ENCODE measurements at regions of chr1 and their contacts with region 1.

Region 1: GRCh38 chr1:62343911-62344310 is 24.7 kb upstream of the KANK4 start:
- DNase-seq: no peak
- H3K4me3 ChIP-seq: no peak overlapping the region
- H3K27ac ChIP-seq: no peak overlapping the region
- H3K4me1 ChIP-seq: peaks cover 2% of the 10 kb centered on the region
- H3K27me3 ChIP-seq: no peaks in the 10 kb centered on the region
- CTCF ChIP-seq: no peak

Region 2: DNA sequence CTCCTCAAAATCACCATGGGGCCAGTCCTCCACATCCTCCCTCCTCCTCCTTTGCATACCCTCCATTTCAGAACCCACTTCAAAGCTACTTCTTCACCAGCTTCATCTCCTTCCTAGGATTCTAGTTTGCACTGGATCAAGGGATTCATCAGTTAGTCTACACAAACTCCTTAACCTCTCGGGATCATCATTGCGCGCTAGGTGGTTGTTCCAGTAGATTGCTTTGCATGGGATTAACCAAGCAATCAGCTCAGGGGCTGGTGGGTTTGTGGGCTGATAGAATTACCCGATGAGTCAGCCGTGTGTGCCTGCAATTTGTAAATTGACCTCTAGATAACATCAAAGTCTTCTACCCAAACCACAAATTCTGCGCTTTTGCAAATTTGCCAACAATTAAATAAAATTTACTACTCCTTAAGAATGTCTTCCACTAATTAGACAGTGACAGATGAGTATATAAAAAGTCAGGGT is 32.4 kb before region 1 on chr1:
- CTCF ChIA-PET with region 1: no interaction called
- POLR2A ChIA-PET with region 1: interaction called, 12 read pairs
- intact Hi-C with region 1: no loop called
- DNase-seq: peak; percentile 76
- H3K4me3 ChIP-seq: no peak overlapping the region
- H3K27ac ChIP-seq: no peak overlapping the region
- H3K4me1 ChIP-seq: peaks cover 26% of the 10 kb centered on the region
- H3K27me3 ChIP-seq: peaks cover 10% of the 10 kb centered on the region
- CTCF ChIP-seq: no peak

Region 3: DNA sequence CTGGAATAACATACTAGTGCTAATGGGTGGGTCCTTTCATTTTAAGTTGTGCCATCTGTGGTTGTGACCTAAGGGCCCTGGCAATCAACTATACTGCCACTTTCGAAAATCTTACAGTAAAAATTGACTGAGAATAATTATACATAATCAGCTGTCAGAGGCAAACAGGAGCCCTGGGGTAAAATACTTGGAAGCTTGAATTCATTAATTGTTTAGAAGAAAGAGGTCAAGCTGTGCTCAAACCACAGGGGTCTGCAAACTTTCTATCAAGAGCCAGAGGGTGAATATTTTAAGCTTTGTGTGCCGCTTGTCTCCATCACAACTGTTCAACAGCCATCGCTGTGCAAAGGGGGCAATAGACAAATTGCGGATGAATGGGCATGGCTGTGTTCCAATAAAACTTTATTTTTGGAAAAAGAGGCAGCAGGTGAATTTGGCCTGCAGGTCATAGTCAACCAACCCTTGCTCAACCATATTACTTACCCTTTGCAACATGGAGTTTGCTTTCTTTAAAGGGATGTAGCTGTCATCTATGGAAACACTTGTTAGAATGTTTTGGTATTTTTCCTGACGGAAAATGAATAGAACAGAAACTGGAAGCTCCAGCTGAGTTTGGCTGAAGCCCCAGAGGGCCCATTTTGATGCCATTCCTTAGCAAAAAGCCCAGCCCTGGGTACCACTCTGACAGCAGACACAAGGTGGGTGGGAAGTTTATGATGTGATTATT is 57.3 kb after region 1 on chr1:
- CTCF ChIA-PET with region 1: interaction called, 10 read pairs
- POLR2A ChIA-PET with region 1: no interaction called
- intact Hi-C with region 1: no loop called
- DNase-seq: peak; percentile 86
- H3K4me3 ChIP-seq: no peak overlapping the region
- H3K27ac ChIP-seq: no peak overlapping the region
- H3K4me1 ChIP-seq: no peaks in the 10 kb centered on the region
- H3K27me3 ChIP-seq: peaks cover 9% of the 10 kb centered on the region
- CTCF ChIP-seq: no peak

Measured in A673 (cell line).